IMR-90 (cell line): ENCODE measurements at regions of chr12 and their contacts with region 1.

Region 1: GRCh38 chr12:105705765-105706164 is 375.3 kb downstream of the C12orf75 start:
- DNase-seq: peak; percentile 67
- ATAC-seq: peak; percentile 85
- H3K4me3 ChIP-seq: no peak overlapping the region
- H3K27ac ChIP-seq: no peak overlapping the region
- H3K4me1 ChIP-seq: peaks cover 5% of the 10 kb centered on the region; the same call in 1 of the 2 replicates
- H3K27me3 ChIP-seq: peaks cover 6% of the 10 kb centered on the region
- CTCF ChIP-seq: peak; percentile 85
- POLR2A ChIP-seq: no peak
- RAD21 ChIP-seq: peak; percentile 79

Region 2: GRCh38 chr12:105420659-105421240 is 285.0 kb before region 1 on chr12:
- CTCF ChIA-PET with region 1: no interaction called
- POLR2A ChIA-PET with region 1: no interaction called
- dilution Hi-C with region 1: no loop called
- in situ Hi-C with region 1: no loop called
- intact Hi-C with region 1: loop called (anchors 2 kb)
- DNase-seq: peak; percentile 77
- ATAC-seq: peak; percentile 64
- H3K4me3 ChIP-seq: no peak overlapping the region
- H3K27ac ChIP-seq: no peak overlapping the region
- H3K4me1 ChIP-seq: peaks cover 13% of the 10 kb centered on the region
- H3K27me3 ChIP-seq: no peaks in the 10 kb centered on the region
- CTCF ChIP-seq: peak; percentile 97
- POLR2A ChIP-seq: peak; percentile 69
- RAD21 ChIP-seq: peak; percentile 100